ENCODE measurements at regions of chr2 and their contacts with region 1.

Region 1: GRCh38 chr2:180125245-180125962 is 118.3 kb upstream of the CWC22 start:
- DNase-seq: peak; percentile 63
- H3K4me3 ChIP-seq: no peak overlapping the region
- H3K27ac ChIP-seq: no peak overlapping the region
- H3K4me1 ChIP-seq: no peaks in the 10 kb centered on the region
- CTCF ChIP-seq: peak; percentile 75

Region 2: DNA sequence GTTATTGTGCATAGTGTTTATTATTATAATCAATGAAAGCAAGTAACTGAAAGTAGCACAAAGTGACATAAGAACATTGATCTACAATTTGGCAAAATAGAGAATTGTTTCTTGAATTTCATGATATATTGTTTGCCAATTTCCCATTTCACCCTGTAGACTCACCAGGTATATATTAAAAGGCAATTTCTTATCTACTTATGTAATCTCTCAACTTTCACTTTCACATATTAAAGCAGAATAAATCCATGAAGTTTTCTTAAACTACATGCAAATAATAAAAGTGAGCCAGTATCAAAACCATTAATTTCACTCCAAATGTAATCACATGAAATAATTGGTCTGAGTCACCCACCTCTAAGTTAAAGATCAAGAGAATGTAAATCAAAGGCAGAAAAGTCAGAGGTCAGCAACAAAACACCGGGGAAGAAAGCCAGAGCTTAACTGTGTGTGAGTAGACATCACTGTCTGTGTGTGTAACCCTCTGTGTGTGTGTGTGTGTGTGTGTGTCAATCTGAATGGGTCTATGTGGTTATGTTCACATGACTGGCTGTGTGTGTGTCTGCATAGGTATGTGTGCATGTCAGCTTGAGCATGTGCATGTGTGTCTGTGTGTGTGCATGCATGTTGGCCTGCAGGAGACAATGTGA is 308.1 kb before region 1 on chr2:
- CTCF ChIA-PET with region 1: no interaction called
- POLR2A ChIA-PET with region 1: no interaction called
- intact Hi-C with region 1: no loop called
- DNase-seq: no peak
- H3K4me3 ChIP-seq: no peak overlapping the region
- H3K27ac ChIP-seq: no peak overlapping the region
- H3K4me1 ChIP-seq: no peaks in the 10 kb centered on the region
- CTCF ChIP-seq: no peak

Region 3: DNA sequence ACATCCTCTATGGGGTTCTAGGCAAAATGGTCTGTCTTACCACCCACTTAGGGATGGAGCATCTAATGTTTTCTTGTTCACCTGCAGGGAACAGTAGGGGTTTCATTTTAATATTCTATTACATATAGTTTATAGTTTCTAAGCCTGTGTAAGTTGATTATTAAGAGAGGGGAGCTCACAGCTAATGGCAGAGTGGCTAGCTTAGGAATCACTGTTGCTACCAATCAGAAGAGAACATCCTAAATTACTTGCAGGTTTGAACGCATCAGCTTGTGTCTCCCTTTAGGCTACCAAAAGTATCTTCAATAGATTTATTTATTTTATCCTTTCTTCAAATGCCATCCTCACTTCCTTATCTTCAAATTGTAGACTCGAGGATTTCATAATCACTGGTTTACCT is 312.1 kb after region 1 on chr2:
- CTCF ChIA-PET with region 1: no interaction called
- POLR2A ChIA-PET with region 1: no interaction called
- intact Hi-C with region 1: loop called (anchors 10 kb)
- DNase-seq: no peak
- H3K4me3 ChIP-seq: no peak overlapping the region
- H3K27ac ChIP-seq: no peak overlapping the region
- H3K4me1 ChIP-seq: no peaks in the 10 kb centered on the region
- CTCF ChIP-seq: no peak

Measured in OCI-LY7 (cell line).